Gastrocnemius medialis (tissue), 4 donors: ENCODE measurements at regions of chr6 and their contacts with region 1.

Region 1: GRCh38 chr6:149405823-149406765 is 6.0 kb downstream of the SUMO4 start:
- DNase-seq: no peak
- ATAC-seq: no peak
- H3K4me3 ChIP-seq: no peak overlapping the region
- H3K27ac ChIP-seq: peak overlapping the region in 3 of 4 donors; percentile 19 to 48 (median 24)
- H3K4me1 ChIP-seq: peaks cover 10 to 15% of the 10 kb centered on the region in 2 donors
- H3K27me3 ChIP-seq: no peaks in the 10 kb centered on the region
- CTCF ChIP-seq: no peak
- POLR2A ChIP-seq: no peak

Region 2: GRCh38 chr6:149316798-149317655 is 89.1 kb before region 1 on chr6:
- in situ Hi-C with region 1: loop called in 1 of 4 experiments (anchors 25 kb)
- intact Hi-C with region 1: loop called (anchors 2 kb)
- DNase-seq: peak; percentile 79 to 90
- ATAC-seq: peak; percentile 89
- H3K4me3 ChIP-seq: peak overlapping the region; percentile 89 to 98 (median 96)
- H3K27ac ChIP-seq: peak overlapping the region; percentile 94 to 98 (median 96)
- H3K4me1 ChIP-seq: peaks cover 24 to 30% of the 10 kb centered on the region in 2 donors
- H3K27me3 ChIP-seq: peaks cover 0 to 2% (median 0%) of the 10 kb centered on the region in 3 donors
- CTCF ChIP-seq: no peak
- POLR2A ChIP-seq: peak; percentile 66 to 68

Region 3: GRCh38 chr6:149335924-149336608 is 70.0 kb before region 1 on chr6:
- in situ Hi-C with region 1: no loop called
- intact Hi-C with region 1: loop called (anchors 2 kb)
- DNase-seq: peak; percentile 30 to 53
- ATAC-seq: peak; percentile 92 to 97
- H3K4me3 ChIP-seq: no peak overlapping the region
- H3K27ac ChIP-seq: peak overlapping the region; percentile 54 to 78 (median 73)
- H3K4me1 ChIP-seq: peaks cover 85 to 89% of the 10 kb centered on the region in 2 donors
- H3K27me3 ChIP-seq: no peaks in the 10 kb centered on the region
- CTCF ChIP-seq: no peak
- POLR2A ChIP-seq: no peak